ENCODE measurements at regions of chr15 and their contacts with region 1.

Region 1: DNA sequence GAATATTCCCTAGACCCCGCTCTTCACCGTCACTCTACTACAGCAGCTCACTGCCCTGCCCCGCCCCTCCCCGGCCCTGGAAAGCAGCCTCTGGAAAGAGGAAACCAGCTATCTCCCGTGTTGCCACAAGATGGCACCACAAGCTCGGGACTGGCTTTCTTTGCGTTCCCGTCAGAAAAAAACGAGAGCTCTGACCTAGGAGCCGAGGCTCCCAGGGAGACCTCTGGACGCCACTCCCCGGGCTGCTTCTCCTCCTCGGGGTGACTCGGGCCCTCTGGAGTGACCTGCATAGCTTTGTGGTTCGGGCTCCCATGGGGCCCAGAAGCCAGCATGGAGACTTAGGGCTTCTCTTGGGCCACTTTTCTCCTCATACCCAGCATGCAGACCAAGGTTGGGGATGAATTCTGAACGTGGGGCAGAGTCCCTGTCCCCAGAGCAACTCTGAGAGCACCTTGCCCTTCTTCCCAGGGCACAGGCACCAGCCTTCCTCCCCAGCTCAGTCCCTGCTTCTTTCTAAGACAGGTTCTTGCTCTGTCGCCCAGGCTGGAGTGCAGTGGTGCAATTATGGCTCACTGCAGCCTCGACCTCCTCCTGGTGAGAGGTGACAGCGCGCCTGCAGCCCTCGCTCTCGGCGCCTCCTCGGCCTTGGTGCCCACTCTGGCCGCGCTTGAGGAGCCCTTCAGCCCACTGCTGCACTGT is 19.0 kb downstream of the STOML1 start:
- DNase-seq: peak; percentile 88
- H3K4me3 Mint-ChIP-seq: no peak overlapping the region
- H3K27ac Mint-ChIP-seq: no peak overlapping the region
- H3K4me1 Mint-ChIP-seq: peaks cover 45% of the 10 kb centered on the region
- H3K27me3 Mint-ChIP-seq: peaks cover 33% of the 10 kb centered on the region

Region 2: GRCh38 chr15:73991726-73992593 is 18.8 kb after region 1 on chr15 and contains the start of gene STOML1:
- CTCF ChIA-PET with region 1: interaction called, 45 read pairs
- DNase-seq: peak; percentile 95
- H3K4me3 Mint-ChIP-seq: peak within 1 kb of the TSS; percentile 79
- H3K27ac Mint-ChIP-seq: peak within 1 kb of the TSS; percentile 88
- H3K4me1 Mint-ChIP-seq: peaks cover 53% of the 10 kb centered on the region
- H3K27me3 Mint-ChIP-seq: no peaks in the 10 kb centered on the region

Region 3: GRCh38 chr15:74047781-74048180 is 74.6 kb after region 1 on chr15:
- CTCF ChIA-PET with region 1: interaction called, 32 read pairs
- DNase-seq: peak; percentile 11
- H3K4me3 Mint-ChIP-seq: no peak overlapping the region
- H3K27ac Mint-ChIP-seq: no peak overlapping the region
- H3K4me1 Mint-ChIP-seq: peaks cover 12% of the 10 kb centered on the region
- H3K27me3 Mint-ChIP-seq: peaks cover 4% of the 10 kb centered on the region

Region 4: GRCh38 chr15:74127260-74127953 is 154.3 kb after region 1 on chr15:
- CTCF ChIA-PET with region 1: interaction called, 10 read pairs
- DNase-seq: peak; percentile 88
- H3K4me3 Mint-ChIP-seq: no peak overlapping the region
- H3K27ac Mint-ChIP-seq: peak overlapping the region; percentile 65
- H3K4me1 Mint-ChIP-seq: peaks cover 13% of the 10 kb centered on the region
- H3K27me3 Mint-ChIP-seq: peaks cover 94% of the 10 kb centered on the region